ENCODE measurements at regions of chr12 and their contacts with region 1.

Region 1: DNA sequence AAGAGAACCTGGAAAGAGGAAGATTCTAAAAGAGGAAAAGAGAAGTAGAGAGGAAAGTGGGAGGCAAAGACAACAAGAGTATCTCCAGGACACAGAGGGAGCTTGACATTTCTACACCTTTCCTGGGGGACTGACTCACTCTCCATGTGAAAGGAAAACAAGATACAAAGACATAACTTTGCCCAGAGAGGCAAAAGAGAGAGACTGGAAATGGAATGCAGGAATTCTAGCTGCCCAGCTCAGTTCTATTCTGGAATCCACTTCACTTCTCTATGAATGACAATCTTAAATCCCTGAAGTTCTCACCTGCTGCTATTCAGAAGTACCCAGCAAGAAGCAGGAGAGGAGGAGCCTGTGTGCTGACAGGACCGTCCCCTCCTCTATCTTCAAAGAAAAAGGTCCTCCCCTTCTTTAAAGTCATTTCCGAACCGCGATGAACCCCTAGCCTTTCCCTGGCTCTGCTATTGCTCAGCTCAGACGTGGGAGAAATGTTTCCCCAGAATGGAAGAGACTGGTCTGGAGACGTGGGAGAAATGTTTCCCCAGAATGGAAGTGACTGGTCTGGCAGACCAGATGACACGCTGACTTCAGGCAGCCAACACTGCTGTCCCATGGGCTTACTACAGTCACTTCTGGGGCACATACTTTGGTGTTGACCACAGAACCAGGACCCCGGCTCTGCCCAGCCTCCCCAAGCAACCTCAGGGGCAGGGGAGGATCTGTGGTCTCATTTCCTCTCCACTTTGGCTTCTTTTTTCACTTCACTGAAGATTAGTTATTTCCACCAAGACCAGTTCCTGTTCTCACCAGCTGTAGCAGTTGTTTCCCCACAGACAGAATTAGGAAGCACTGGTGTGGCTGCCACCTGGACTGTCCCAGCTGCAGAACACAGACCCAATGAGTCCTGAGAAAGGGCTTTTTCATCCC is 8.3 kb downstream of the FMNL3 start:
- DNase-seq: peak; percentile 68
- ATAC-seq: peak; percentile 85
- H3K4me3 Mint-ChIP-seq: peak overlapping the region; percentile 56
- H3K27ac Mint-ChIP-seq: peak overlapping the region; percentile 84
- H3K4me1 Mint-ChIP-seq: peaks cover 47% of the 10 kb centered on the region
- H3K27me3 Mint-ChIP-seq: no peaks in the 10 kb centered on the region

Region 2: GRCh38 chr12:49644620-49644994 is 54.3 kb before region 1 on chr12:
- CTCF ChIA-PET with region 1: interaction called, 332 read pairs
- POLR2A ChIA-PET with region 1: interaction called, 3 read pairs
- intact Hi-C with region 1: no loop called
- DNase-seq: peak; percentile 89
- ATAC-seq: peak; percentile 93
- H3K4me3 Mint-ChIP-seq: no peak overlapping the region
- H3K27ac Mint-ChIP-seq: peak overlapping the region; percentile 78
- H3K4me1 Mint-ChIP-seq: peaks cover 18% of the 10 kb centered on the region
- H3K27me3 Mint-ChIP-seq: no peaks in the 10 kb centered on the region

Region 3: GRCh38 chr12:49662998-49663843 is 35.7 kb before region 1 on chr12:
- CTCF ChIA-PET with region 1: interaction called, 332 read pairs
- POLR2A ChIA-PET with region 1: interaction called, 4 read pairs
- intact Hi-C with region 1: loop called (anchors 1 to 2 kb)
- DNase-seq: peak; percentile 85
- ATAC-seq: peak; percentile 78
- H3K4me3 Mint-ChIP-seq: peak overlapping the region; percentile 58
- H3K27ac Mint-ChIP-seq: peak overlapping the region; percentile 95
- H3K4me1 Mint-ChIP-seq: peaks cover 78% of the 10 kb centered on the region
- H3K27me3 Mint-ChIP-seq: no peaks in the 10 kb centered on the region

Region 4: DNA sequence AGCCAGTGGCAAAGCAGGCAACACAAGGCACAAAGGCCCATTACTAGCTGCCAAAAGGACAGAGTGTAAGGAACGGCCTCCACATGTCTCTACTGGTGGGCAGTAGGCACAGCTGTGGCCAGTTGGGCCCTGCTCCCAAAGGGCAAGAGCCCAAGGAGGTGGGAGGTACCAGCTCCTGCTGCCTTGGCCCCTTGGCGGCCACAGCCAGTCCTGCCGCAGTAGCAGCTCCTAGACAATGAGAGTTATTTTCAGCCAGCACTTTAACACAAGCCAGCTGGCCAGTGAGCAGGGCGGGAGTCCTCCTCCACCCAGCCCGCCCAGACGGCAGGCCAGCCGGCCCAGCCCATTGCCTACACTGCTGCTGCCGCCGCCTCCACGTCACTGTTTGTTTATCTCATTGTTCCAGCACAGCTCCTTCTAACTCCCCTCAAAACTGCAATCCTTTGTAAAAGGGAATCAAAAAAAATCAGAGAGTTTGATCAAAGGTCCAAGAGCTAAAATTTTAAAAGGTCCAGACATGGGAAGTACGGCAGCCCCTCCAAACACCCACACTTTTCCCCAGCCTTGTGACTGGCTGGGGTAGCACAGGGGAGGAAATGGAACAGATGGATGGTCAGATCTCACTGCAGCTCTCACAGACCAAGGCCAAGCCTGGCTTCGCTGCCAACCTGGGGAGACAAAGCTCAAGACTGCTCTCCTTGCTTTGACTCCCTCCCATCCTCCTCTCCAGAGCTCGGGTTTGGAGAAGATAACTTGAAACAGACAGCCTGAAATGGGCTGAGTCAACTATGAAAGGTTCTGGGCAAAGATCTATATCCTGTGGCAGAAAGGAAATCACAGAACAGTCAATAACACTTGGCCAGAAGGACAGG is 25.2 kb before region 1 on chr12:
- CTCF ChIA-PET with region 1: interaction called, 22 read pairs
- POLR2A ChIA-PET with region 1: interaction called, 6 read pairs
- intact Hi-C with region 1: loop called in 1 of 2 experiments (anchors 2 kb)
- DNase-seq: peak; percentile 28
- ATAC-seq: peak; percentile 34
- H3K4me3 Mint-ChIP-seq: no peak overlapping the region
- H3K27ac Mint-ChIP-seq: peak overlapping the region; percentile 93
- H3K4me1 Mint-ChIP-seq: peaks cover 82% of the 10 kb centered on the region
- H3K27me3 Mint-ChIP-seq: no peaks in the 10 kb centered on the region